ENCODE measurements at regions of chr5 and their contacts with region 1.

Region 1: GRCh38 chr5:95934207-95934804 is 27.3 kb downstream of the ELL2 start:
- DNase-seq: no peak
- H3K4me3 ChIP-seq: no peak overlapping the region
- CTCF ChIP-seq: no peak
- POLR2A ChIP-seq: no peak

Region 2: GRCh38 chr5:95961617-95962474 is 27.5 kb after region 1 on chr5 and contains the start of gene ELL2:
- intact Hi-C with region 1: no loop called
- DNase-seq: peak; percentile 98 to 100
- H3K4me3 ChIP-seq: peak within 1 kb of the TSS; percentile 86
- CTCF ChIP-seq: no peak
- POLR2A ChIP-seq: peak in 1 of 2 donors; percentile 89
- total RNA-seq, gene ELL2: 32.4 to 50.3 (median 45.1) TPM

Region 3: DNA sequence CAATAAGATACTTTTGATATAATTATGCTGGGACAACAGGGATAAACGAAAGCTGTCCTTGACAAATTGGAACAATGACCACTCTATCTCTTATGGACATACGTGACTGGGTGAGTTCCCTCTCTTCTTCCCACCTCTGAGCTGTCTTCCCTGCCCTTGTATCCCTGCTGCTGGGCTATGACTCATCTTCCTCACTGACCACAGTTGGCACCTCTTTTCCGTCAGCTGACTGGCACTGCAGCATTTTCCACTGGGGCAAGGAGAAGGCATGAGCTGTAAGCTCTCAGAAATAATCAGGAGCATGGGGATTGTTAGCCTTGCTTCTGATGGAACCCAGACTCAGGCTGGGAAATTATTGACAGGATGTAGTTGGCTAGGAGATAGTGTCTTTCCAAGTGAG is 450.0 kb after region 1 on chr5:
- intact Hi-C with region 1: no loop called
- DNase-seq: no peak
- H3K4me3 ChIP-seq: no peak overlapping the region
- CTCF ChIP-seq: no peak
- POLR2A ChIP-seq: no peak

Region 4: GRCh38 chr5:96662725-96663513 is 728.6 kb after region 1 on chr5:
- intact Hi-C with region 1: loop called (anchors 5 kb)
- DNase-seq: peak; percentile 94 to 99
- H3K4me3 ChIP-seq: peak overlapping the region; percentile 91
- CTCF ChIP-seq: no peak
- POLR2A ChIP-seq: no peak